ENCODE measurements at regions of chr5 and their contacts with region 1.

Region 1: GRCh38 chr5:172764849-172765765 is 5.9 kb downstream of the DUSP1 start:
- DNase-seq: peak; percentile 99
- H3K4me3 Mint-ChIP-seq: peak overlapping the region; percentile 79
- H3K27ac Mint-ChIP-seq: peak overlapping the region; percentile 91
- H3K4me1 Mint-ChIP-seq: peaks cover 26% of the 10 kb centered on the region
- H3K27me3 Mint-ChIP-seq: peaks cover 5% of the 10 kb centered on the region

Region 2: GRCh38 chr5:172714491-172715421 is 50.4 kb before region 1 on chr5:
- intact Hi-C with region 1: loop called (anchors 2 kb)
- DNase-seq: peak; percentile 90
- H3K4me3 Mint-ChIP-seq: no peak overlapping the region
- H3K27ac Mint-ChIP-seq: no peak overlapping the region
- H3K4me1 Mint-ChIP-seq: peaks cover 2% of the 10 kb centered on the region
- H3K27me3 Mint-ChIP-seq: peaks cover 10% of the 10 kb centered on the region

Region 3: GRCh38 chr5:172777881-172778814 is 13.0 kb after region 1 on chr5:
- intact Hi-C with region 1: loop called (anchors 1 kb)
- DNase-seq: peak; percentile 71
- H3K4me3 Mint-ChIP-seq: peak overlapping the region; percentile 60
- H3K27ac Mint-ChIP-seq: peak overlapping the region; percentile 87
- H3K4me1 Mint-ChIP-seq: peaks cover 35% of the 10 kb centered on the region
- H3K27me3 Mint-ChIP-seq: no peaks in the 10 kb centered on the region

Region 4: DNA sequence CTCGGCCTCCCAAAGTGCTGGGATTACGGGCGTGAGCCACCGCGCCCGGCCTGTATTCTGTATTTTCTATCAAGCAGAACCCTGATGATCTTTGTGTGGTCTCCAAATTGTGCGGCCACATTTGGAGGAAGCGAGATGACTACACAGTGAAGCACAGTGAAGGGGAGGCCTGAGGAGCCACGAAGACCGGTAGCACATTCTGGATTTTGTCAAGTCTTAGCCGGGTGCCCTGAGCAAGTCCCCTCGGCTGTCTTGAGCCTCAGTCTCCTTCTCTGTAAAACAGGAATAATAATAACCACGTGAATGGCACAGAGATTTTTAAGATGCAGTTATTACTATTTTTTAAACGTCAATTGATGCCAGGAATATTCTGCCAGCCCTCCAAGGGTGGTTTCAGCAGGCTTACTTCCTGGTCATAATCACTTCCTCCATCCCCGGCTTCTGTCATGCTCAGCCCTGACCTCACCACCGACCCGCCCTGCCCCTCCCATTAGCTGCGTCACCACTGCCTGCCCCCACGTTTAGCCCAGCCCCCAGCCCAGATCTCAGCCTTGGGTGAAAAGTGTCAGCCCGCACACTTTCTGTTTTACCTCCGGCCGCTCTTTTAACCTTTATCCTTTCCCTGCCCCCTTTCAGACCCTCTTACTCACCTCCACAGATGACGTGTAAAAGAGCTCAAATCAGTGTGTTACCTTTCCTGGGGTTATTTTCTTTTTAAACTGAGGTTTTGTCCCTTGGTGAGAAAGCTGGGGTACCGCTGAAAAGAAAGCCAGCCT is 42.0 kb after region 1 on chr5:
- intact Hi-C with region 1: loop called (anchors 1 kb)
- DNase-seq: peak; percentile 93
- H3K4me3 Mint-ChIP-seq: peak overlapping the region; percentile 69
- H3K27ac Mint-ChIP-seq: peak overlapping the region; percentile 80
- H3K4me1 Mint-ChIP-seq: peaks cover 14% of the 10 kb centered on the region
- H3K27me3 Mint-ChIP-seq: no peaks in the 10 kb centered on the region

Region 5: GRCh38 chr5:172833686-172834414 is 68.7 kb after region 1 on chr5 and contains the start of gene ERGIC1:
- intact Hi-C with region 1: loop called (anchors 1 kb)
- DNase-seq: peak; percentile 95
- H3K4me3 Mint-ChIP-seq: peak within 1 kb of the TSS; percentile 89
- H3K27ac Mint-ChIP-seq: peak within 1 kb of the TSS; percentile 76
- H3K4me1 Mint-ChIP-seq: peaks cover 27% of the 10 kb centered on the region
- H3K27me3 Mint-ChIP-seq: no peaks in the 10 kb centered on the region
- total RNA-seq, gene ERGIC1: 47.1 and 47.3 TPM in 2 replicates

Region 6: GRCh38 chr5:172958331-172959046 is 193.4 kb after region 1 on chr5:
- intact Hi-C with region 1: loop called (anchors 2 kb)
- DNase-seq: peak; percentile 86
- H3K4me3 Mint-ChIP-seq: peak overlapping the region; percentile 92
- H3K27ac Mint-ChIP-seq: peak overlapping the region; percentile 90
- H3K4me1 Mint-ChIP-seq: peaks cover 30% of the 10 kb centered on the region
- H3K27me3 Mint-ChIP-seq: peaks cover 4% of the 10 kb centered on the region

Measured in activated CD4-positive, alpha-beta T cell treated with anti-CD3 and anti-CD28 coated beads, Interleukin-2, amount 10 ng/mL, durations not matched to agents 24 days and 14 days (primary cell).